Aorta (tissue), 5 donors: ENCODE measurements at regions of chr10 and their contacts with region 1.

Region 1: DNA sequence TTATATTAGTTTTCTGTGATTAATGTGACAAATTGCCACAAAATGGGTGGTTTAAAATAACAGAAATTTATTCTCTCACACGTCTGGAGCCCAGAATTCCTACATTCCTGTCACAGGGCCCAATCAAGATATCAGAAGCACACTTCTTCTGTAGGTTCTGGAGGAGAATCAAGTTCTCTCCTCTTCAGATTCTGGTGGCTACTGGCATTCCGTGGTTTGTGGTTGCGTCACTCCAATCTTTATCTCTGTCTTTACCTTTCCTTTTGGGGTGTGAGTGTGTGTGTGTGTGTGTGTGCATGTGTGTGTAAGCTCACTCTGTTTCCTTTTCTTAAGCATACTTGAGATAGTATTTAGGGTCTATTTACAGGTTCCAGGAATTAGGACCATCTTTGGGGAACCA is 115.5 kb upstream of the DKK1 start:
- DNase-seq: no peak
- ATAC-seq: no peak
- H3K4me3 ChIP-seq: no peak overlapping the region
- H3K27ac ChIP-seq: no peak overlapping the region
- H3K4me1 ChIP-seq: peaks cover 0 to 8% of the 10 kb centered on the region in 2 donors
- H3K27me3 ChIP-seq: no peaks in the 10 kb centered on the region

Region 2: DNA sequence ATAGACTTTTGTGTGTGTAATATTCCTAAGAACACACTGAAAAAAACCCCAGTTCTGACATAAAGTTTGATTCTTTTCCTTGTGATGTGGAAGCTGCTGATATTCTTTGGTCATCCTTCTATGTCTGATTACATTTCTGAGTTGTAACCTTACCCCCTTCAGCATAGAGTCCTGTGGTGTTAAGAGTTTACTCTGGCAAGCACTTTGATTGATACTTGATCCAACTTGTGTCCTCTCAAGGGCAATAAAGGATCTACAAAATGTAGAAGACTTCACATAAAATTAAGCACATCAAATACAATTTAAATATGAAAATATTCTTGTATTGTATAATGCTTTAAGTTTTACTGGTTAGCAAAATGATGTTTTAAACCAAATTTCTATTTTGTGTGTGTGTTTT is 106.2 kb before region 1 on chr10:
- intact Hi-C with region 1: no loop called
- DNase-seq: no peak
- ATAC-seq: no peak
- H3K4me3 ChIP-seq: no peak overlapping the region
- H3K27ac ChIP-seq: no peak overlapping the region
- H3K4me1 ChIP-seq: peaks cover 0 to 2% of the 10 kb centered on the region in 2 donors
- H3K27me3 ChIP-seq: no peaks in the 10 kb centered on the region

Region 3: DNA sequence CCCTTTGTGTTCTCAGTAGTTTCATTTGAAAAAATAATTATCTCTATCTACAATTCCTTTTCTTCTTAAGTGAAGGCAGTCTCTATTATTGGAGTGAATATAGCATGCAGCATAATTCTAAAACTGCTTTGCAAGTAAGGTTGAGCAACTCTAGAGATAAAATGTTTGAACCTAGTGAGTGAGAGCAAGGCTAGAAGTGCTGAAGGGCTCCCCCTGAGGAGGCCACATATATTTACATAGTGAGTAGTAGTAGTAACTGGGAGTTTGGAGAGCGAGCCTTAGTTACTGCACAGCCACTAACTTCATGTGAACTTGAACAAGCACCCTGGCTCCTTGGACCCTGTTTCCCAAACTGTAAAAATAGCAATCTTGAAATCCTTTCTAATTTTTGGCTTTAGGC is 26.0 kb before region 1 on chr10:
- intact Hi-C with region 1: loop called in 1 of 2 experiments (anchors 2 kb)
- DNase-seq: no peak
- ATAC-seq: no peak
- H3K4me3 ChIP-seq: no peak overlapping the region
- H3K27ac ChIP-seq: no peak overlapping the region
- H3K4me1 ChIP-seq: no peaks in the 10 kb centered on the region
- H3K27me3 ChIP-seq: no peaks in the 10 kb centered on the region